Pancreas (tissue), 10 donors: ENCODE measurements at regions of chr7 and their contacts with region 1.

Region 1: DNA sequence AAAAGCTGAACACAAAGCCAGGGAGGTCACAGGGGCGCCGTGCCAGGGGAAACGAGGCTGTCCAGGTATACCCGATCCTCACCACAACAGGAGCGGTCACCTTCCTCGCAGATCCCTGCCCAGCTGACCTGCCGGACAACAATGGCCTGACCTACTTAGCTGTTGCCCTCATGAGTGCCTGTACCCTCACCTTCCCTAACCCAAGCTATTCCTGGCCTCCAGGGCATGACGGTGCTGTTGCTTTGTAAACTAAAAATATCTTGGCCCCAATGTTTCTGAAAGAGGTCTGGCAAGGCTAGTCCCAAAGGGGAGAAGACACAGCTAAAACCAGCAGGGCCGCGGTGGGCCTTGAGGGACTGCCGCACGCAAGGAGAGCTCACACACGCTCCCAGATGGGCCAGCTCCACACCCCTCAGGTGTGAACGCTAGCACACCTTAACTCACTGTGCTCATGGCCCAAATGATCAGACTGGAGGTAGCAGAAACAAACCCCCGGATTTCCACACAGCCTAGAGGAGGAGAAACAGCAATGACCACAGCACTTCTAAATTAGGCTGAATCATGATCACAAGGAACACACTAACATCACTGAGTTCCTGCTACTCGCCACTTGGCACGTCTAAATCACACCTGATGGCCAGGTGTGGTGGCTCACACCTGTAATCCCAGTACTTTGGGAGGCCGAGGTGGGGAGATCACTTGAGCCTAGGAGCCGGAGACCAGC is 66.3 kb upstream of the CYTH3 start:
- DNase-seq: no peak
- ATAC-seq: no peak
- H3K4me3 ChIP-seq: no peak overlapping the region
- H3K27ac ChIP-seq: no peak overlapping the region
- H3K4me1 ChIP-seq: no peaks in the 10 kb centered on the region
- H3K27me3 ChIP-seq: no peaks in the 10 kb centered on the region
- CTCF ChIP-seq: no peak

Region 2: DNA sequence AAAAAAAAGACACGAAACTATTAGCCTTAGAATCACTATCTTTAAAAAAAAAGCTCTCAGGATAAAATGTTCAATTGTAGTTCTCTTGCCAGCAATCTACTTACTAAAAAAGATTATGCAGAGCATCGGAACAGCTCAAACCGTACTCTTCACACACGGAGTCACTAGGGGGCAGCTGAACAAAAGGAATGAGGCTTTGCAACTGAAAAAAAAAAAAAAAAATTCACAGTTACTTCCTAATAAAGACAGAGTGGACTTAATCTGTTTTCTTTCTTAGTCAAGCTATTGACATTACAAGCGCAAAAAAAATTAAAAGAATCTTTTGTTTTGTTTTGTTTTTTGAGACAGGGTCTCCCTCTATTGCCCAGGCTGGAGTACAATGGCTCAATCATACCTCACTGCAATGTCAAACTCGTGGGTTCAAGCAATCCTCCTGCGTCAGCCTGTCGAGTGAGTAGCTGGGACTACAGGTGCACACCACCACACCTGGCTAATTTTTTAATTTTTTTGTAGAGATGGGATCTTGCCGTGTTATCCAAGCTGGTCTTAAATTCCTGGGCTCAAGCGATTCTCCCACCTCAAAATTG is 341.4 kb before region 1 on chr7:
- intact Hi-C with region 1: loop called in 1 of 3 experiments (anchors 10 kb)
- DNase-seq: peak in 4 of 6 donors; percentile 29 to 62 (median 44)
- ATAC-seq: peak; percentile 80 to 90 (median 86)
- H3K4me3 ChIP-seq: no peak overlapping the region
- H3K27ac ChIP-seq: no peak overlapping the region
- H3K4me1 ChIP-seq: peaks cover 0 to 11% (median 0%) of the 10 kb centered on the region in 3 donors
- H3K27me3 ChIP-seq: no peaks in the 10 kb centered on the region
- CTCF ChIP-seq: peak in 2 of 4 donors; percentile 39 to 43